A549 (cell line): ENCODE measurements at regions of chr1 and their contacts with region 1.

Region 1: DNA sequence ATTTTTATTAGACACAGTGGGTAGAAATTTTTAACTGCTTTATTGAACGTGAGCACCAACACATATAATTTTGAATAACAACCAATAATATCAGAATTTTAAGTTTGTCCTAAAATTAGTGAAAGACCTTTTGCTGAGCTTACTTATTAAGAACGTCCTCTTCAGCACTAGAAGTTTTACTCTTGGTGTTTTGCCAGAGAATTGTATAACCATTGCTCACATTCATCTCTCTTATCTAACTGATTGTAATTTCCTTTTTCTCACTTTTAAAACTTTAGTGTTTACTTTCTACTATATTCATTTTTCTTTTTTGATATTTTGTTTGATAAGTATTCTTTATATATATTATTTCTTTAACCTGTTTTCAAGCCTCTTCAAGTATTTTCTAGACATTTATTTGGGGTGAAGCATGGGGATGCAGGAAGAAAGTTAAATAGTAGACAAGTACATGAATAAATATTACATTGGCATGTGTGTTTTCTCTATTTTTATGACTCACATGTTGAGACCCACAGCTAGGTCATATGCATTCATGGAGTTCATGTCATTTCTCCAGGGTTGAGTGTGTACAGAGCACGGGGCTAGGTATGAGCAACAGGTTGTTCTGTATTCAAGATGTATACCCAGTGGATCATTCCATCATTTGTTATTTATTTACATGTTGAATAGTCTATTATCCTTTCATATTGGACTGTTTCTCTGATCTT is 90.6 kb downstream of the ATP6V1G3 start:
- DNase-seq: no peak
- ATAC-seq: no peak
- H3K4me3 ChIP-seq: no peak overlapping the region
- H3K27ac ChIP-seq: no peak overlapping the region
- H3K4me1 ChIP-seq: peaks cover 12% of the 10 kb centered on the region; the same call in 2 of the 3 replicates
- CTCF ChIP-seq: no peak
- EP300 ChIP-seq: no peak
- POLR2A ChIP-seq: no peak
- RAD21 ChIP-seq: no peak

Region 2: GRCh38 chr1:198424441-198424840 is 25.4 kb before region 1 on chr1:
- CTCF ChIA-PET with region 1: no interaction called
- POLR2A ChIA-PET with region 1: no interaction called
- DNase-seq: no peak
- ATAC-seq: no peak
- H3K4me3 ChIP-seq: no peak overlapping the region
- H3K27ac ChIP-seq: no peak overlapping the region
- H3K4me1 ChIP-seq: no peaks in the 10 kb centered on the region
- CTCF ChIP-seq: no peak
- EP300 ChIP-seq: no peak
- POLR2A ChIP-seq: no peak
- RAD21 ChIP-seq: no peak

Region 3: GRCh38 chr1:198465201-198466144 is 15.6 kb after region 1 on chr1:
- CTCF ChIA-PET with region 1: interaction called, 10 read pairs
- POLR2A ChIA-PET with region 1: no interaction called
- DNase-seq: peak; percentile 20 to 46
- ATAC-seq: peak in 1 of 2 experiments; percentile 86; a peak in 4 of 6 replicates
- H3K4me3 ChIP-seq: no peak overlapping the region
- H3K27ac ChIP-seq: no peak overlapping the region
- H3K4me1 ChIP-seq: no peaks in the 10 kb centered on the region
- CTCF ChIP-seq: peak; percentile 82
- EP300 ChIP-seq: no peak
- POLR2A ChIP-seq: no peak
- RAD21 ChIP-seq: peak; percentile 86 to 91

Region 4: GRCh38 chr1:198681831-198682759 is 232.2 kb after region 1 on chr1:
- CTCF ChIA-PET with region 1: no interaction called
- POLR2A ChIA-PET with region 1: no interaction called
- DNase-seq: no peak
- ATAC-seq: no peak
- H3K4me3 ChIP-seq: no peak overlapping the region
- H3K27ac ChIP-seq: no peak overlapping the region
- H3K4me1 ChIP-seq: no peaks in the 10 kb centered on the region
- CTCF ChIP-seq: no peak
- EP300 ChIP-seq: no peak
- POLR2A ChIP-seq: no peak
- RAD21 ChIP-seq: no peak